Endothelial cell of umbilical vein (primary cell): ENCODE measurements at regions of chr14 and their contacts with region 1.

Region 1: DNA sequence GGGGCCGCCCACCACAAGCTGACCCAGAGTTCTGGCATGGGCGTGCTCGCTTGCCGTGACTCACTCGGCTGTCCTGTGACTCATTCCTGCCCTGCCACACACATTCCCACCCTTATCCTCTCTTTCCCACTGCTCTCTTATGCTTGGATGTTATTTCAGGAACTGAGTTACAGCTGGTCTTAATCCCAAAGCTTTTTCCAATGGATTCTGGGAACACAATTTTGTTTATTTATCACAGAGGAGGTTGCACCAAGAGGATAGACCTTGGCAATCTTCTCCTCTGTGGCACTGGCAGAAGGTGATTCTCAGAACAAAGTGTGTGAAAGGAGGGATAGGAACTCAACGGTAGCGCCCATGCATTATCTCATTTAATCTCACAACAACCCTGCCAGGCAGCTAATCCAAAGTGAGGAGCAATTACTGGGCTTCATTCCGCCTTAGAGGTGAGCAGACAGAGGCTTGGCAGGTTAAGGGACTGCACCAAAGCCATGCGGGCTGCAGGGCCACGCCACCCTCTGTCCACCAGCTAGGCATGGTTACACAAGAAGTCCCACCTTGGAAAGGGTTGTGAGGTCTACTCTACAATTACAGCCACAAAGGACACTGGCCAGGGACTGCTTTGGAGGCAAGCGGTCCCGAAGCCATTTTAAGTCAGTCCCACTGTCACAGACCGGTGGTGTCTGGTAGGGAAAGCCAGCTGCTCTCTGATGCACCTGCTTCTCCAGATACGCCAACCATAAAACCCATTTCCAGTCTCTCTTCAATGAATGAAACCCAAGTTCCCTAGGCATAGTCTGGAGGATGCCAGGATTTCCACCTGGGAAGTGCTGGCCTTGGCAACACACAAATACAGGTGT is 32.9 kb downstream of the SYNE3 start:
- DNase-seq: peak; percentile 98
- H3K4me3 ChIP-seq: no peak overlapping the region
- H3K27ac ChIP-seq: peak overlapping the region; percentile 18
- H3K4me1 ChIP-seq: peaks cover 13% of the 10 kb centered on the region
- H3K27me3 ChIP-seq: no peaks in the 10 kb centered on the region
- CTCF ChIP-seq: no peak
- POLR2A ChIP-seq: no peak

Region 2: DNA sequence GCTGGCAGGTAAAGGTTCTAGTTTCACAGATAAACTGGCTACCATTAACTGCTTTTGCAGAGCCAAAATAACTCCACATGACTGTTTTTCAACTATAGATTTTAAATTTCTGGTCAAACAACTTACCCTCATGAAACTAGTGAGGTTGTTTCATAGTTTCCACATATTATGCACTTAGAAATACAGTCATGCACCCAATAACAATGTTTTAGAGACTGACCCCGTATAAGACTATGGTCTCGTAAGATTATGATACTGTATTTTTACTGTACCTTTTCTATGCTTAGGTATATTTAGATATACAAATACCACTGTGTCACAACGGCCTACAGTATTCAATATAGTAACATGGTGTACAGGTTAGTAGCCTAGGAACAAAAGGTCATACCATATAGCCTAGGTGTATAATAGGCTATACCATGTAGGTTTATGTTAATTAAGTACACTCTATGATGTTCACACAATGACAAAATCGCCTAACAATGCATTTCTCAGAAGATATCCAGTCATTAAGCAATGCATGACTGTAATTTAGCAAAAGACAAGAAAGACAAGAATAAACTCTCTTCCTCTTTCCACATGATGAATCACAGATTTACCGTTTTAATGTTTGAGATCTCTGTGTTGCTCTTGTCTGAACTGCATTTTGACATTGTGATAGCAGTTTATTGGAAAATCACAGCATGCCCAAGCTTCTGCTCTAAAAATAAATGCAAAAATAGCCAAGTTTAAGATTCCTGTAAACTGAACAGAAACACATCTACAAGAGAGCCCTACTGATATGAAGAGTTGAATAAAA is 343.3 kb before region 1 on chr14:
- CTCF ChIA-PET with region 1: no interaction called
- POLR2A ChIA-PET with region 1: no interaction called
- dilution Hi-C with region 1: no loop called
- intact Hi-C with region 1: no loop called
- DNase-seq: no peak
- H3K4me3 ChIP-seq: no peak overlapping the region
- H3K27ac ChIP-seq: no peak overlapping the region
- H3K4me1 ChIP-seq: no peaks in the 10 kb centered on the region
- H3K27me3 ChIP-seq: no peaks in the 10 kb centered on the region
- CTCF ChIP-seq: no peak
- POLR2A ChIP-seq: no peak

Region 3: DNA sequence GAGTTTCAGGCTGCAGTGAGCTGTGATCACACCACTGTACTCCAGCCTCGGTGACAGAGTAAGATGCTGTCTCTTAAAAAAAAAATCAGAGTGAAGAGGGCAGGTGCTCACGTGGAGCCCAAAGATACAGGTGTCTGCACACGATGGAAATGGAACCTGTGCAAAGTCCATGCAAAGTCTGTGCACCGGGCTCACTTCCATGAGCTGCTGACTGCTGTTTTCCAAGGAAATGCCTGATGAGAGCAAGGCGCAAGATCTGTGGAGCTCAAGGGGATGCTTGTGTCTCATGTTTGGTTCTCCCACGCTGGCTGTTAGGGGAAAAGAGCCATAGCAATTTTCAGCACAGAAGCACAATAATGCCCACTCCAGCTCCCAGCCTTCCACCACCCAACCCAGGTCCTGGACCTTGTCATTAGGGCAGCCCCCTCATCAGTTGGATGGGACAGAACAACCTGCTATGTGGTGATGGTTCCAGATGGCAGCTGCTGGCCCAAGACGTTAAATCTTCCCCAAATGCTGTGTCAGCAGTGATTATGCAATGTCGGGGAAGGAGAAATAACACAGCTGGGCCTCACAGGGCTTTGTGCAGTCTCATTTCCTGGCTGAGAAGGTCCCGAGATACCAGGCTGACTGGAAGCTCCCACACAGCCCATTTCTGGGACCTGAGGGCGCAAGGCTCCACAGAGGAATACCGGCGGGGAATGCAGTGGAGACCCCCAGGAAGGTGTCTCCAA is 298.3 kb before region 1 on chr14:
- CTCF ChIA-PET with region 1: no interaction called
- POLR2A ChIA-PET with region 1: no interaction called
- dilution Hi-C with region 1: no loop called
- intact Hi-C with region 1: no loop called
- DNase-seq: peak; percentile 63
- H3K4me3 ChIP-seq: no peak overlapping the region
- H3K27ac ChIP-seq: peak overlapping the region; percentile 27
- H3K4me1 ChIP-seq: peaks cover 38% of the 10 kb centered on the region
- H3K27me3 ChIP-seq: no peaks in the 10 kb centered on the region
- CTCF ChIP-seq: no peak
- POLR2A ChIP-seq: no peak

Region 4: DNA sequence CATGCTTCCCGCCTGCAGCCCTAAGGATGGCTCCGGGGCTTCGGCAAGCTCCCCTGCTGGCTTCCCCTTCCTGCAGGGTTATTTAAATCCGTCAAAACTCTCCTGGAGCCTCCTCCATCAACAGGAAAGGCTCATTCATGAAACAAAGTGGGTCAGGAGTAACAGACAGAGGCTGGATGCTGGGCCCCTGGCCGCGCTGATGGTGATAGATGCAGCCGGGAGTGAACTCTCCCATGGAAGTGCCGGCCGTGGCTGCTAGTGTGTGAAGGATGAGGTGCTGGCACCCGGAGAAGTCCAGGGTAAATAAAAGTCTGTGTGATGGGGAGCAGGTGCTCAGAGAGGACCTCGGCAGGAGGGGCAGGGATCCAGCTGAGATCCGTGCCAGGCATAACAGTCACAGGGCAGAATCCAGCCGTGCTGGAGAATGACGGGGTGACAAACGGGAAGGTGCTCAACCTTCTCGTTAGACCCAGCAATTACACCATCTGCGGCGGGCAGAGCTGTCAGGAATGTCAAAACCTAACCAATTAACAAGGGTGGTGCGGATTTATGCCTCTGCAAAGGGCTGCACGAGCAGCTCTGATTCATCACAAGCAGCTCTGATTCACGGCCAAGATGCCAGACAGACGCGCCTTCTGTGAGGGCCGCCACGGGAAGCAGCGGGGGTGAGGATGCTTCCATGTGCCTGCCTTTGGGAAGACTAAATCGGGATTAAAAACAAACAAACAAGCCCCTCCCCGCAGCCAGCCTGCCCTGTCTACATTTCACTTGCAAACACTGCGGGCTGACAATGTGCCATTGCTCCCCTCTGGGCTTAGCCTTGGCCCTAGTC is 22.7 kb before region 1 on chr14:
- CTCF ChIA-PET with region 1: interaction called, 6 read pairs
- POLR2A ChIA-PET with region 1: interaction called, 4 read pairs
- dilution Hi-C with region 1: no loop called
- intact Hi-C with region 1: loop called (anchors 1 kb)
- DNase-seq: peak; percentile 52
- H3K4me3 ChIP-seq: no peak overlapping the region
- H3K27ac ChIP-seq: no peak overlapping the region
- H3K4me1 ChIP-seq: peaks cover 24% of the 10 kb centered on the region
- H3K27me3 ChIP-seq: no peaks in the 10 kb centered on the region
- CTCF ChIP-seq: no peak
- POLR2A ChIP-seq: no peak

Region 5: GRCh38 chr14:95495538-95496025 is 12.0 kb after region 1 on chr14:
- CTCF ChIA-PET with region 1: interaction called, 13 read pairs
- POLR2A ChIA-PET with region 1: interaction called, 3 read pairs
- dilution Hi-C with region 1: no loop called
- intact Hi-C with region 1: loop called (anchors 1 kb)
- DNase-seq: peak; percentile 68
- H3K4me3 ChIP-seq: no peak overlapping the region
- H3K27ac ChIP-seq: peak overlapping the region; percentile 57
- H3K4me1 ChIP-seq: peaks cover 27% of the 10 kb centered on the region
- H3K27me3 ChIP-seq: no peaks in the 10 kb centered on the region
- CTCF ChIP-seq: no peak
- POLR2A ChIP-seq: no peak

Region 6: DNA sequence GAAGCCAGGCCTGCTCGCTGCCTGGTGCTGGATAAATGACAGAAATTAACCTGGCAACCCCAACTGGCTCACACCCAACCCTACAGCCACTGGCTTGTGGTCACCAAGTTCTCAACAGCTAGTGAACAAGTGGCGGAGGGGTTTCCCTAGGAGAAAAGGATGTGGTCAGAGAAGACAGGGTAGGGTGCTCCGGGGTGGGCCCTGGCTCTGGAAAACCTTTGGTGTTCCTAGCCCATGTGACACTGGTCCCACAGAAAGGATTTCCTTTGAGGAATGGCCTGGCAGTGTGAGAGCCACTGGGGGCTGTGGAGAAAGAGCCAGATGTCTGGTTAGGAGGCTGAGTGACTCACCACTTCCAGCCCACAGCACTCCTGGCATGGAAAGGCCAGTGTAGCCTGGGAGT is 24.2 kb after region 1 on chr14:
- CTCF ChIA-PET with region 1: interaction called, 5 read pairs
- POLR2A ChIA-PET with region 1: no interaction called
- dilution Hi-C with region 1: no loop called
- intact Hi-C with region 1: loop called (anchors 1 kb)
- DNase-seq: peak; percentile 83
- H3K4me3 ChIP-seq: no peak overlapping the region
- H3K27ac ChIP-seq: peak overlapping the region; percentile 88
- H3K4me1 ChIP-seq: peaks cover 28% of the 10 kb centered on the region
- H3K27me3 ChIP-seq: no peaks in the 10 kb centered on the region
- CTCF ChIP-seq: no peak
- POLR2A ChIP-seq: no peak

Region 7: GRCh38 chr14:95515596-95516552 is 32.3 kb after region 1 on chr14:
- CTCF ChIA-PET with region 1: interaction called, 15 read pairs
- POLR2A ChIA-PET with region 1: no interaction called
- dilution Hi-C with region 1: no loop called
- intact Hi-C with region 1: loop called (anchors 1 kb)
- DNase-seq: peak; percentile 49
- H3K4me3 ChIP-seq: peak overlapping the region; percentile 51 to 58 (median 52)
- H3K27ac ChIP-seq: no peak overlapping the region
- H3K4me1 ChIP-seq: peaks cover 55% of the 10 kb centered on the region
- H3K27me3 ChIP-seq: no peaks in the 10 kb centered on the region
- CTCF ChIP-seq: peak; percentile 24 to 57
- POLR2A ChIP-seq: no peak